Activated B cell treated with CpG ODN at 0.5 μM for 24 hours (primary cell): ENCODE measurements at regions of chr1 and their contacts with region 1.

Region 1: DNA sequence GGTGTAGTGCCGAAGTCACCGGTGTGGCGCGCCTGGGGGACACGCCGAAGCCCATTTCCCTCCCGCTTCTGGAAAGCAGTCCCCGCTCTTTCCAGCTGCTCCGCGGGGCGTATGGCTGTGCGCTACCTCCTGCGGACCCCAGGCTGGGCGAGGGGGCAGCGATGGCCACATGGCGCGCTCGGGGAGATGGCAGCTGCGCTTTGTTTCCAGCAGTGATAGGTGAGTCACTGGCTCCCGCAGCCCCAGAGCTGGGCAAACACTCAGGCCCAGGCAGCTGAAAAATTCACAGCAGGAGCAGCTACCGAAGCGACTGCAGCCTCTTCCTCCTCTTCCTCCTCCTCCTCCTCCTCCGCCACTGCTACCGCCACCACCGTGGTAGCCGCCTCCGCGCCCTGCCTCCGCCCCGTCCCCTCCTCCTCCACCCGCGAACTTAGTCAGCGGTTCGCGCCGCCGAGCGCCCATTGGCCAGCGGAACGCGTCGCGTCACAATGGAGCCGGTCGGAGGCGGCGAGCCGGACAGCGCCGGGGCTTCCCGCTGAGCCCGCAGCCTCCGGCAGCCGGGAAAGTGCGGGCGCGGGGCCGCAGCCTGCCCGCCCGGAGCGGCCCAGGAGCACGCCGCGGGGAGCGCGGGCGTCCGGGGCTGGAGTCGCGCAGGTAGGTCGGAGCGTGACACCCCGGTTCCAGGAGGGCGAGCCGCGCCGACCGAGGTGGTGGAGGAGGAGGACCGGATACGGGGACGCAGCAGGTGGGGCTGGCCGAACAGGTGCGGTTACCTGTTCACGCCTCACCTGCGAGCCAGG is at the start of gene LRRC8B:
- DNase-seq: peak; percentile 85
- ATAC-seq: peak; percentile 84
- H3K4me3 Mint-ChIP-seq: peak within 1 kb of the TSS; percentile 92
- H3K27ac Mint-ChIP-seq: peak within 1 kb of the TSS; percentile 91
- H3K4me1 Mint-ChIP-seq: peaks cover 31% of the 10 kb centered on the region
- H3K27me3 Mint-ChIP-seq: no peaks in the 10 kb centered on the region
- CTCF ChIP-seq: no peak
- total RNA-seq, gene LRRC8B: 14.7 and 19.1 TPM in 2 replicates

Region 2: DNA sequence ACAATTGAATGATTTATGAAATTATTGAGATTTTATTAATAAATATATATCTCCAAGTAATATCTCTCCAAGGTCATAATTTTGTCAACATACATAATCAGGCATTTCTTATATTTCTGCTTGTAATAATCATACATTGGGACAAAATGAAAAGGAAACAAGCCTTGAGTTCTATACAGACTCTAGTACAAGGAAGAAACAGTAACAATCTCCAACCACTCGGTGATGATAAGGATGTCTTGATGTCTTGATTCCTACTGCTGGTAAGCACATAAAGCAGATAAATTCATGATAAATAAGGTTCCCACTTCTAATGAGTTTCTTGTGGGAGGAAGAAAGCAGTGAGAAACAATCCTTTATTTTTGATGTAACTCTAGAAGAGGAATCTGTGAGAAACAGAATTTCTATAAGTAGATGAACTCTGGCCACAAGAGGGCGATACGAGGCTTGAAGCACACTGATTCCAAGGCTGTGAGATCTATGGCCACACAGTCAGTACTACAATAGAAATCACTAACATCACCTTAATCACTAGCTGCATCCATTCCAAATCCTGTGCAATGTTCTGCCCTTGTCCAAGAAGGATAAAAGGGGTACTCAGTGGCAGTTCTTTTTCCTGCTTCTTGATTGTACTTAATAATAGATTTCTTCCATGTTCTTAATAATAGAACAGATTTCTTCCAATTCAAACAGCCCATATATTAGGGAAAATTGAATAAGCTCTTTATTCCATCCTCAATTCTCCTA is 41.4 kb before region 1 on chr1:
- CTCF ChIA-PET with region 1: interaction called, 4 read pairs
- POLR2A ChIA-PET with region 1: no interaction called
- intact Hi-C with region 1: loop called (anchors 1 kb)
- DNase-seq: no peak
- ATAC-seq: peak; percentile 74
- H3K4me3 Mint-ChIP-seq: no peak overlapping the region
- H3K27ac Mint-ChIP-seq: no peak overlapping the region
- H3K4me1 Mint-ChIP-seq: no peaks in the 10 kb centered on the region
- H3K27me3 Mint-ChIP-seq: peaks cover 4% of the 10 kb centered on the region
- CTCF ChIP-seq: no peak

Region 3: GRCh38 chr1:89512996-89513720 is 11.4 kb before region 1 on chr1:
- CTCF ChIA-PET with region 1: no interaction called
- POLR2A ChIA-PET with region 1: no interaction called
- intact Hi-C with region 1: no loop called
- DNase-seq: no peak
- ATAC-seq: no peak
- H3K4me3 Mint-ChIP-seq: no peak overlapping the region
- H3K27ac Mint-ChIP-seq: no peak overlapping the region
- H3K4me1 Mint-ChIP-seq: no peaks in the 10 kb centered on the region
- H3K27me3 Mint-ChIP-seq: peaks cover 3% of the 10 kb centered on the region
- CTCF ChIP-seq: no peak

Region 4: GRCh38 chr1:89566761-89567174 is 42.2 kb after region 1 on chr1:
- CTCF ChIA-PET with region 1: no interaction called
- POLR2A ChIA-PET with region 1: interaction called, 3 read pairs
- intact Hi-C with region 1: loop called (anchors 5 kb)
- DNase-seq: no peak
- ATAC-seq: no peak
- H3K4me3 Mint-ChIP-seq: no peak overlapping the region
- H3K27ac Mint-ChIP-seq: no peak overlapping the region
- H3K4me1 Mint-ChIP-seq: peaks cover 31% of the 10 kb centered on the region
- H3K27me3 Mint-ChIP-seq: no peaks in the 10 kb centered on the region
- CTCF ChIP-seq: no peak

Region 5: GRCh38 chr1:89605692-89606091 is 81.1 kb after region 1 on chr1:
- CTCF ChIA-PET with region 1: interaction called, 12 read pairs
- POLR2A ChIA-PET with region 1: no interaction called
- intact Hi-C with region 1: no loop called
- DNase-seq: no peak
- ATAC-seq: no peak
- H3K4me3 Mint-ChIP-seq: no peak overlapping the region
- H3K27ac Mint-ChIP-seq: no peak overlapping the region
- H3K4me1 Mint-ChIP-seq: peaks cover 46% of the 10 kb centered on the region
- H3K27me3 Mint-ChIP-seq: no peaks in the 10 kb centered on the region
- CTCF ChIP-seq: no peak

Region 6: GRCh38 chr1:89719502-89720306 is 195.1 kb after region 1 on chr1:
- CTCF ChIA-PET with region 1: no interaction called
- POLR2A ChIA-PET with region 1: interaction called, 3 read pairs
- intact Hi-C with region 1: loop called (anchors 1 kb)
- DNase-seq: no peak
- ATAC-seq: peak; percentile 92
- H3K4me3 Mint-ChIP-seq: peak overlapping the region; percentile 72
- H3K27ac Mint-ChIP-seq: peak overlapping the region; percentile 96
- H3K4me1 Mint-ChIP-seq: peaks cover 56% of the 10 kb centered on the region
- H3K27me3 Mint-ChIP-seq: no peaks in the 10 kb centered on the region
- CTCF ChIP-seq: no peak

Region 7: GRCh38 chr1:89843281-89844121 is 318.9 kb after region 1 on chr1:
- CTCF ChIA-PET with region 1: no interaction called
- POLR2A ChIA-PET with region 1: no interaction called
- intact Hi-C with region 1: loop called (anchors 1 kb)
- DNase-seq: peak; percentile 76
- ATAC-seq: peak; percentile 91
- H3K4me3 Mint-ChIP-seq: peak overlapping the region; percentile 94
- H3K27ac Mint-ChIP-seq: peak overlapping the region; percentile 90
- H3K4me1 Mint-ChIP-seq: peaks cover 53% of the 10 kb centered on the region
- H3K27me3 Mint-ChIP-seq: no peaks in the 10 kb centered on the region
- CTCF ChIP-seq: peak; percentile 45